ENCODE measurements at regions of chrX and their contacts with region 1.

Region 1: DNA sequence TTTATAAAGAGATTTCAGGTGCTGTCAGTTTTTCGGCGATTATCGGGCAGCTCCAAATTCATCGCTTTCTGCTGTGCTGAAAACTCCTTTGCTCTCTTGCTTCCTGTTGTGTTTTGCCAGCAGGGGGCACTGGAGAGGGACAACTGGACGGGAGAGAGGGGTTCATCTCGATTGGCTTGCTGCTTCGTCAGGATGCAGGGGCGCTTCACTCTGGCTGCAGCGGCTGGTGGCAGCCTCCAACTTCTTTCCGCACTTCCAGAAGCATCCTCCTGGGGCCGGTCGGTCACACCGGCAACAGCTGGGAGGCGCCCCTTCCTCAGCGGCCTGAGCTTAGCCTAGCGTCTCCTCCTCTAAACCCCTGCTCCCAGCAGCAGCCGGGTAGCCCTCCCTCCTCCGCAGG is 29.5 kb downstream of the MSL3 start:
- DNase-seq: peak; percentile 85
- ATAC-seq: peak; percentile 100
- H3K4me3 Mint-ChIP-seq: no peak overlapping the region
- H3K27ac Mint-ChIP-seq: no peak overlapping the region
- H3K4me1 Mint-ChIP-seq: no peaks in the 10 kb centered on the region
- H3K27me3 Mint-ChIP-seq: no peaks in the 10 kb centered on the region
- CTCF ChIP-seq: peak; percentile 32; the same call in 1 of the 2 replicates

Region 2: DNA sequence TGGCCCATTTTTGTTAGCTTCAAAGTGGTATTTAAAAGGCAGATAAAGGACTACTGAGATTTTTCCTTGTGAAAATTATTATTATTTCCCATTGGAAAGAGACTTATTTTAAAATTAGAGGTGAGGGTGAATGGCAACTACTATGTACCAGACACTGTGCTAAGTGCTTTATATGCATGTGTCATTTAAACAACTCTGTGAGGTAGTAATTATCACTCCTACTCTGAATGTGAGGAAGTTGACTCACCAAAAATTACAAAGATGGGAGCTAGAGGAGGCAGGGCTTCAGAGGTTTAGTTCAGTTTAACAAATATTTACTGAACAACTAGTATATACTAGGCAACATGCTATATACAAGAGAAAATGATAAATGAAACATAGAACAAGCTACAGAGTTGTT is 48.7 kb after region 1 on chrX:
- CTCF ChIA-PET with region 1: no interaction called
- POLR2A ChIA-PET with region 1: no interaction called
- DNase-seq: no peak
- ATAC-seq: no peak
- H3K4me3 Mint-ChIP-seq: no peak overlapping the region
- H3K27ac Mint-ChIP-seq: no peak overlapping the region
- H3K4me1 Mint-ChIP-seq: peaks cover 3% of the 10 kb centered on the region; the same call in 1 of the 2 replicates
- H3K27me3 Mint-ChIP-seq: no peaks in the 10 kb centered on the region; the same call in 1 of the 2 replicates
- CTCF ChIP-seq: no peak

Region 3: GRCh38 chrX:11908371-11908770 is 120.8 kb after region 1 on chrX:
- CTCF ChIA-PET with region 1: interaction called, 13 read pairs
- POLR2A ChIA-PET with region 1: no interaction called
- DNase-seq: peak; percentile 8
- ATAC-seq: peak; percentile 74
- H3K4me3 Mint-ChIP-seq: no peak overlapping the region
- H3K27ac Mint-ChIP-seq: no peak overlapping the region
- H3K4me1 Mint-ChIP-seq: no peaks in the 10 kb centered on the region
- H3K27me3 Mint-ChIP-seq: no peaks in the 10 kb centered on the region
- CTCF ChIP-seq: no peak